Naive thymus-derived CD4-positive, alpha-beta T cell (primary cell): ENCODE measurements at regions of chr9 and their contacts with region 1.

Region 1: GRCh38 chr9:105244003-105244733 is at the start of gene SLC44A1:
- DNase-seq: peak; percentile 88 to 95 (median 92)
- ATAC-seq: peak; percentile 92
- H3K4me3 ChIP-seq: peak within 1 kb of the TSS; percentile 89
- H3K4me3 Mint-ChIP-seq: peak within 1 kb of the TSS; percentile 90 to 97 (median 92)
- H3K27ac ChIP-seq: peak within 1 kb of the TSS; percentile 67
- H3K27ac Mint-ChIP-seq: peak within 1 kb of the TSS; percentile 84 to 97 (median 90)
- H3K4me1 ChIP-seq: peaks cover 10% of the 10 kb centered on the region in 2 donors
- H3K4me1 Mint-ChIP-seq: peaks cover 19 to 42% (median 29%) of the 10 kb centered on the region in 7 donors
- H3K27me3 ChIP-seq: no peaks in the 10 kb centered on the region
- H3K27me3 Mint-ChIP-seq: peaks cover 0 to 82% (median 0%) of the 10 kb centered on the region in 5 donors
- total RNA-seq, gene SLC44A1: 7.7 to 13.8 (median 11.1) TPM

Region 2: GRCh38 chr9:104386425-104387069 is 857.6 kb before region 1 on chr9:
- CTCF ChIA-PET with region 1: no interaction called
- POLR2A ChIA-PET with region 1: no interaction called
- intact Hi-C with region 1: no loop called
- DNase-seq: no peak
- ATAC-seq: no peak
- H3K4me3 ChIP-seq: no peak overlapping the region
- H3K4me3 Mint-ChIP-seq: no peak overlapping the region
- H3K27ac ChIP-seq: no peak overlapping the region
- H3K27ac Mint-ChIP-seq: no peak overlapping the region
- H3K4me1 ChIP-seq: no peaks in the 10 kb centered on the region
- H3K4me1 Mint-ChIP-seq: no peaks in the 10 kb centered on the region
- H3K27me3 ChIP-seq: no peaks in the 10 kb centered on the region
- H3K27me3 Mint-ChIP-seq: peaks cover 0 to 10% (median 7%) of the 10 kb centered on the region in 5 donors

Region 3: GRCh38 chr9:104765138-104765537 is 479.0 kb before region 1 on chr9:
- CTCF ChIA-PET with region 1: no interaction called
- POLR2A ChIA-PET with region 1: no interaction called
- intact Hi-C with region 1: loop called (anchors 5 kb)
- DNase-seq: no peak
- ATAC-seq: no peak
- H3K4me3 ChIP-seq: no peak overlapping the region
- H3K4me3 Mint-ChIP-seq: peak overlapping the region; percentile 29 to 99 (median 93)
- H3K27ac ChIP-seq: no peak overlapping the region
- H3K27ac Mint-ChIP-seq: peak overlapping the region in 1 of 9 donors; percentile 26
- H3K4me1 ChIP-seq: no peaks in the 10 kb centered on the region
- H3K4me1 Mint-ChIP-seq: peaks cover 4 to 14% (median 6%) of the 10 kb centered on the region in 7 donors
- H3K27me3 ChIP-seq: no peaks in the 10 kb centered on the region
- H3K27me3 Mint-ChIP-seq: peaks cover 0 to 7% (median 0%) of the 10 kb centered on the region in 5 donors

Region 4: DNA sequence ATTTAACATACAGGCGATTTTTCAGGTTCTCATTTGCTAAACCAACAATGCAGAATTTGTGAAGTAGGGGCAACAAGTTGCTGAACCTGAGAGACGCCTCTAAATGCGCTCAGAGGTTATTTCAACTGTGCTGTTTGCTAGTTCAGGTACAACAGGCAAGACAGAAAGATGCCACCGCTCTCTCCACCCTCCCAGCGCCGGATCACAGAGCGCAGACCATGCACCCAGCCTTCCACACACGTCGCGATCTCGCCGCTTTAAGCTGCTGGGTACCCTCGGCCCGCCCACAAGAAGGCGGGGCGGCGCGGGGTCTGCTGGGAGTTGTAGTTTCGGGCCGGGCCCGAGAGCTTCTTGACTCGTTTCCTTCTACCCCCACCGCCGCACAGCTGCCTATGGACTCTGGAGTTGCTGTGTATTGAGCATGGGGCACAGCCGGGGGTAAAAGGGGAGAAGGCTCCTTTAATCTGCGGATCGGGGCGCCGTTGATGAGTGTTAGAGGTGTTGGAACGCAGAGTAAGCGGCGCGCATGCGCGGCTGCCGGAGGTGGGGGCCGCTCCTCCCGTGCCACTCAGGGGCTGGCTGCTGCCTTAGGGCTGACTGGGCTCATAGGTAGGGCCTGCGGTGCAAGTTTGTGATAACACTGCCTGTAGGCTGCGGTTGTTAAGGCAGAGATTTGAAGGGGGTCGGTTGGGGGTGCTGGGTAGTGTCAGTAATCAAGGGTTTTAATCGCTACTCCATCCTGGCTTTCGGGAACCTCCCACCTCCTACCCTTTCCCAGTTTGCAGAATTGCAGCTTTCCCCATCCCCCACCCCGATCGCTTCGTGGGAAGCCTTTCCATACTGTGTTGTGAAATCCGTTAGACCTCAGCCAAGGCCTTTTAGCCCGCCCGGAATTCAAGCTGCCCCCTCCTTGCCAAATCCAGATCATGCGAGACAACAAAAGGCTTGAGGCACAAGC is 275.9 kb before region 1 on chr9:
- CTCF ChIA-PET with region 1: no interaction called
- POLR2A ChIA-PET with region 1: no interaction called
- intact Hi-C with region 1: loop called (anchors 2 to 10 kb)
- DNase-seq: peak; percentile 80 to 95 (median 91)
- ATAC-seq: peak; percentile 99
- H3K4me3 ChIP-seq: peak overlapping the region; percentile 85
- H3K4me3 Mint-ChIP-seq: peak overlapping the region; percentile 82 to 96 (median 94)
- H3K27ac ChIP-seq: peak overlapping the region; percentile 69
- H3K27ac Mint-ChIP-seq: peak overlapping the region; percentile 64 to 92 (median 86)
- H3K4me1 ChIP-seq: peaks cover 0 to 6% of the 10 kb centered on the region in 2 donors
- H3K4me1 Mint-ChIP-seq: peaks cover 12 to 25% (median 17%) of the 10 kb centered on the region in 7 donors
- H3K27me3 ChIP-seq: peaks cover 0 to 4% of the 10 kb centered on the region in 2 donors
- H3K27me3 Mint-ChIP-seq: peaks cover 0 to 30% (median 0%) of the 10 kb centered on the region in 5 donors

Region 5: GRCh38 chr9:104997536-104997935 is 246.6 kb before region 1 on chr9:
- CTCF ChIA-PET with region 1: no interaction called
- POLR2A ChIA-PET with region 1: no interaction called
- intact Hi-C with region 1: no loop called
- DNase-seq: no peak
- ATAC-seq: no peak
- H3K4me3 ChIP-seq: no peak overlapping the region
- H3K4me3 Mint-ChIP-seq: no peak overlapping the region
- H3K27ac ChIP-seq: no peak overlapping the region
- H3K27ac Mint-ChIP-seq: no peak overlapping the region
- H3K4me1 ChIP-seq: peaks cover 0 to 12% of the 10 kb centered on the region in 2 donors
- H3K4me1 Mint-ChIP-seq: peaks cover 10 to 17% (median 17%) of the 10 kb centered on the region in 7 donors
- H3K27me3 ChIP-seq: no peaks in the 10 kb centered on the region
- H3K27me3 Mint-ChIP-seq: peaks cover 0 to 33% (median 0%) of the 10 kb centered on the region in 5 donors

Region 6: DNA sequence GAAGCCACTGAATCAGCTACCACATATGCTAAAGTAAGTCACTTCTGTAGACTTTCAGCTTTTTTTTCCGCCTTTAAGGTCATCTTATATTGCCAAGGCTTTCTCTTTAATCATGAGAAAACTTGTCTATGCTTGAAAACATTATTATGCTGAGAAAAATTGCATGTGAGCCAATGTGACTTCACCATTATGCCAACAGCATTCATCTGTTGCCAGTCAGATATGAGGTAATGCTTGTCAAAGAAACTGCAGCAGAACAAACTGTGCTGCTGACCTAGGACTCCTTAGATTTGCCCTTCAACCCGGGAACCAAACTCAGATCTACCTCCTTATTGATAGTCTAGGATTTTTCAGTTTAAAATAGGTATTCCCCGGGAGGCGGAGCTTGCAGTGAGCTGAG is 34.6 kb after region 1 on chr9:
- CTCF ChIA-PET with region 1: no interaction called
- POLR2A ChIA-PET with region 1: no interaction called
- intact Hi-C with region 1: loop called in 1 of 2 experiments (anchors 5 kb)
- DNase-seq: no peak
- ATAC-seq: no peak
- H3K4me3 ChIP-seq: no peak overlapping the region
- H3K4me3 Mint-ChIP-seq: no peak overlapping the region
- H3K27ac ChIP-seq: no peak overlapping the region
- H3K27ac Mint-ChIP-seq: no peak overlapping the region
- H3K4me1 ChIP-seq: no peaks in the 10 kb centered on the region
- H3K4me1 Mint-ChIP-seq: peaks cover 3 to 21% (median 14%) of the 10 kb centered on the region in 7 donors
- H3K27me3 ChIP-seq: no peaks in the 10 kb centered on the region
- H3K27me3 Mint-ChIP-seq: no peaks in the 10 kb centered on the region

Region 7: GRCh38 chr9:105385381-105385985 is 141.3 kb after region 1 on chr9:
- CTCF ChIA-PET with region 1: no interaction called
- POLR2A ChIA-PET with region 1: interaction called, 3 read pairs
- intact Hi-C with region 1: loop called in 1 of 2 experiments (anchors 1 kb)
- DNase-seq: peak in 8 of 9 donors; percentile 10 to 48 (median 35)
- ATAC-seq: peak; percentile 86
- H3K4me3 ChIP-seq: peak overlapping the region; percentile 59
- H3K4me3 Mint-ChIP-seq: peak overlapping the region; percentile 75 to 98 (median 92)
- H3K27ac ChIP-seq: peak overlapping the region; percentile 65
- H3K27ac Mint-ChIP-seq: peak overlapping the region; percentile 74 to 96 (median 83)
- H3K4me1 ChIP-seq: peaks cover 0 to 4% of the 10 kb centered on the region in 2 donors
- H3K4me1 Mint-ChIP-seq: peaks cover 5 to 23% (median 19%) of the 10 kb centered on the region in 7 donors
- H3K27me3 ChIP-seq: no peaks in the 10 kb centered on the region
- H3K27me3 Mint-ChIP-seq: peaks cover 0 to 19% (median 0%) of the 10 kb centered on the region in 5 donors

Region 8: DNA sequence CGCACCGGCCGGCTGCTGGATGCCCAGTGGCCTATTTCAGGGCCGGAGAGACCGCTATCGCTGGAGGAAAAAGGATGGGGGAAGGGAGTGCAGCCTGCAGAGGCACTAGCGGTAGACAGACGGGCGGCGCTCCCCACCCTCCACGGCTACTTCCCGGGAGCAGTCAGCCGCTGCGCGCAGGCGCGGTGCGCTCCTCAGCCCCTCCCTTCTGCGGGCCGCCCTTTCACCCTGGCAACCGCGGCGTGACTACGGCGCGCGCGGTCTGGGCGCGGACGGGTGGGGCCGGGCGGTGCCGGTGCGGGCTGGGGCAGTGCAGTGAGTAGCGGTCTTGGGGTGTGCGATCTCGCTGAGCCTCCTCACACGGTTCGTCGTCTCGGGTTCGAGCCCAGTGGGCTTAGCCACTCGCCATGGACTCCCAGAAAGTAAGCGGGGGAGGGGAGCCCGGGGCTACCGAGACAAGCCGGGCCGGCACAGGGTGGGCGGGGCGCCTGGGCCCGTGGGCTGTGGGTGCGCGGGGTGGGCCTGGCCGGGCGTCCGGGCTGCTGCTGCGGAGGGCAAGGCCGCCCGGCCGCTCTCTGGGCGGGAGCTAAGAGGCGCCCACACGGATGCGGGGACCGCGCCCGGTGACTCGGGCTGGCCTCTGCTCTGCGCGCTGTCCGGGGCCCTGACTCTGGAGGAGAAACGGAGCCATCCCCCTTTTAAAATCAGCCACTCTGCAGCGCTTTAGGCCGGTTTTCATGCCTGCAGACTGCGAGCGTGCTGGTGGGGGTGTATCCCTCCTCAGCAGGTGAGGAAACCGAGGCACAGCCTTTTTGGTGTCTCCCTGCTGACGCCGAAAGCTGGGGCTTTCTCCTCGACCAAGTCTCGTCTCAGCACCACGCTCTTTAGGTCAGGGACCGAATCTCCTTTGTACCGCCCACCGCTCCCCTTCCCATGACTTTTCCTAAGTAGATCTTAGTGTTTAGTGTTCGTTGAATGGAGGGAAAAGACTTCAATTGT is 203.9 kb after region 1 on chr9 and contains the start of gene FSD1L:
- CTCF ChIA-PET with region 1: no interaction called
- POLR2A ChIA-PET with region 1: no interaction called
- intact Hi-C with region 1: loop called in 1 of 2 experiments (anchors 1 kb)
- DNase-seq: peak; percentile 38 to 86 (median 67)
- ATAC-seq: peak; percentile 94
- H3K4me3 ChIP-seq: peak within 1 kb of the TSS; percentile 81
- H3K4me3 Mint-ChIP-seq: peak within 1 kb of the TSS; percentile 70 to 89 (median 84)
- H3K27ac ChIP-seq: peak within 1 kb of the TSS; percentile 43
- H3K27ac Mint-ChIP-seq: peak within 1 kb of the TSS in 4 of 9 donors; percentile 34 to 80 (median 46)
- H3K4me1 ChIP-seq: peaks cover 3 to 5% of the 10 kb centered on the region in 2 donors
- H3K4me1 Mint-ChIP-seq: peaks cover 0 to 35% (median 9%) of the 10 kb centered on the region in 7 donors
- H3K27me3 ChIP-seq: no peaks in the 10 kb centered on the region
- H3K27me3 Mint-ChIP-seq: peaks cover 0 to 8% (median 3%) of the 10 kb centered on the region in 5 donors
- total RNA-seq, gene FSD1L: 0.38 to 5.8 (median 0.61) TPM